Posterior vena cava (tissue), 2 donors: ENCODE measurements at regions of chr11 and their contacts with region 1.

Region 1: GRCh38 chr11:104435494-104435893 is 271.5 kb upstream of the PDGFD start:
- DNase-seq: no peak

Region 2: GRCh38 chr11:105219269-105219668 is 783.8 kb after region 1 on chr11:
- intact Hi-C with region 1: loop called in 1 of 2 experiments (anchors 5 kb)
- DNase-seq: no peak